CD8-positive, alpha-beta T cell (primary cell): ENCODE measurements at regions of chr15 and their contacts with region 1.

Region 1: DNA sequence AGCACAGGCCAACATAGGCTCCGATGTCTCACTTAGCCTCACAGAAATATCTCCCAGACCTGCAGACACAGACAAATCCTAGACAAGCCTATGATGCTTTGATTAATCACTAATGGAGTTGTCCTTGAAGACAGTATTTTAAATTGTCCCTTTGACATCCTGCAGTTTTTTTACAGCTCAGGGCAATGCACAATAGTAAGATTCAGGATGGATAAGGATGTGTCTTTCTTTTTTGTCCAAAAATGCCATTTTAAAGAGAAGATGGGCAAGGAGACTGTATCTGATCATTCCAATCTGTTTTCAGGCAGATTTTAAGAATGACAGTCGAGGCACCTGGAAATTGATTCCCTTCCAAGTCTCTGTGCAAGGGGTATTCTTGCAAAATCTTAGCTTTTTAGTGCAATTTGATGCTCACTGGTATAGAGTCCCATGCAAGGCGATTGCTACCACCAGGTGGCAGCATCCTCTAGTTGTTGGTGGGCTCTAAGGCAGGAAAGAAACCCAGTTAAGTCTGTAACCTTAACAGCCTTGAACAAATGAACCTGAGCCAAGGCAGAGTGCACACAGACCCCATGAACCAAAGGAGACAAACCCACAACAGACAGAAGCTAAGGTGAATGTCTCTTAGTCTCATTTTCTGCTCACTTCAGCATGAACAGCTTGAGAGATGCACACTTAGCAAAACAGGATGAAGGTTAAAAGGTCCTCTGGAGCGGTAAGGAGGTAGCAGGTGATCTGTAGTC is 51.2 kb upstream of the MINAR1 start:
- DNase-seq: peak; percentile 53 to 84 (median 76)
- ATAC-seq: peak; percentile 76
- H3K4me3 ChIP-seq: no peak overlapping the region
- H3K4me3 Mint-ChIP-seq: no peak overlapping the region
- H3K27ac ChIP-seq: no peak overlapping the region
- H3K27ac Mint-ChIP-seq: no peak overlapping the region
- H3K4me1 ChIP-seq: no peaks in the 10 kb centered on the region
- H3K4me1 Mint-ChIP-seq: peaks cover 4% of the 10 kb centered on the region
- H3K27me3 ChIP-seq: no peaks in the 10 kb centered on the region
- H3K27me3 Mint-ChIP-seq: no peaks in the 10 kb centered on the region
- CTCF ChIP-seq: peak; percentile 78

Region 2: DNA sequence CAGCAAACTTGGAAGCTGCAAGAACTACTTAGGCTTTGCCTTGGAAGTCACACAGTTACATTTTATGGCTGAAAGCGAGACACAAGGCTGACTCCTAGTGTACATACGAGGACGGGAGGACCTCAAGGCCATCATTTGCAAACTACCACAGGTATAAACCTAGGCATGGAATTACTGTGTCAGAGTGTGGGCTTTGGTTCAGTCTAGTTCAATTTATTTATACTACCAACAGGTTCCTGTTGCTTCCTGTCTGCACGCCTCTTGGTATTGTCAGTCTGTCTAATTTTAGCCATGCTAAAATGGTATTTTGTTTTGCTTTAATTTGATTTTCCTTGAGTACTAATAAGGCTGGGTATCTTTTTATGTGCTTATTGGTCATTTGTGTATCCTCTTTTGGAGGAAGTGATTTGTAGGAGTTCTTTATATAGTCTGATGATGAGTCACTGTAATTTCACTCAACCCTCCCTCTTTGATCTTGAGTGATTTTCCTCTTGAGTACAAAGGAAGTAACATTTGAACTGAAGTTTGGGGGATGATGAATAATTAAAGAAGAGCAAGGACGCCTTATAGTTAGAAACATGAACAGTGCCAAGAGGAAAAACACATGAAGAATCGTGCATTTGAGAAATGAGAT is 90.2 kb before region 1 on chr15:
- CTCF ChIA-PET with region 1: no interaction called
- POLR2A ChIA-PET with region 1: no interaction called
- intact Hi-C with region 1: no loop called
- DNase-seq: no peak
- ATAC-seq: no peak
- H3K4me3 ChIP-seq: no peak overlapping the region
- H3K4me3 Mint-ChIP-seq: no peak overlapping the region
- H3K27ac ChIP-seq: no peak overlapping the region
- H3K27ac Mint-ChIP-seq: no peak overlapping the region
- H3K4me1 ChIP-seq: no peaks in the 10 kb centered on the region
- H3K4me1 Mint-ChIP-seq: peaks cover 5% of the 10 kb centered on the region
- H3K27me3 ChIP-seq: no peaks in the 10 kb centered on the region
- H3K27me3 Mint-ChIP-seq: peaks cover 37% of the 10 kb centered on the region
- CTCF ChIP-seq: no peak

Region 3: GRCh38 chr15:79366691-79367090 is 14.2 kb before region 1 on chr15:
- CTCF ChIA-PET with region 1: interaction called, 13 read pairs
- POLR2A ChIA-PET with region 1: no interaction called
- intact Hi-C with region 1: no loop called
- DNase-seq: no peak
- ATAC-seq: no peak
- H3K4me3 ChIP-seq: no peak overlapping the region
- H3K4me3 Mint-ChIP-seq: no peak overlapping the region
- H3K27ac ChIP-seq: no peak overlapping the region
- H3K27ac Mint-ChIP-seq: no peak overlapping the region
- H3K4me1 ChIP-seq: no peaks in the 10 kb centered on the region
- H3K4me1 Mint-ChIP-seq: no peaks in the 10 kb centered on the region
- H3K27me3 ChIP-seq: no peaks in the 10 kb centered on the region
- H3K27me3 Mint-ChIP-seq: no peaks in the 10 kb centered on the region
- CTCF ChIP-seq: no peak

Region 4: DNA sequence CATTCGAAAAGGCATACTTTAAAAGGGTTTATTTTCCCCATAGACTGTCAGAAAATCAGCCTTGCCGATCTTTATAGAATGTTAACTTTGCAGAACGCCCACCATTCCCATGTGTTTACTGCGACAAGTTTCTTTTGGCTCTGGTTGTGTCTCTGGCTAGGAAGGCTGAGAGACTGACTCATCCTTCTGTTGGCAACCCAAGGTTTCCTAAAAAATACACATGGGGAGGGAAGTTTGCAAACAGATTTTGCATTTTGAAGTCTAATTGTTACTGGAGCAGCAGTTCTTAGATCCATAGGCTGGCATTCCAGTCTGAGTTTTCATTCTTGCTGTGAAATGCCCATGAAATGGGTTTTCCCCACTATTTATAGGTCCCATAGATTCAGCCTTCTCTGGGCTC is 13.3 kb after region 1 on chr15:
- CTCF ChIA-PET with region 1: interaction called, 20 read pairs
- POLR2A ChIA-PET with region 1: no interaction called
- intact Hi-C with region 1: no loop called
- DNase-seq: no peak
- ATAC-seq: no peak
- H3K4me3 ChIP-seq: no peak overlapping the region
- H3K4me3 Mint-ChIP-seq: no peak overlapping the region
- H3K27ac ChIP-seq: no peak overlapping the region
- H3K27ac Mint-ChIP-seq: no peak overlapping the region
- H3K4me1 ChIP-seq: no peaks in the 10 kb centered on the region
- H3K4me1 Mint-ChIP-seq: no peaks in the 10 kb centered on the region
- H3K27me3 ChIP-seq: no peaks in the 10 kb centered on the region
- H3K27me3 Mint-ChIP-seq: no peaks in the 10 kb centered on the region
- CTCF ChIP-seq: no peak

Region 5: DNA sequence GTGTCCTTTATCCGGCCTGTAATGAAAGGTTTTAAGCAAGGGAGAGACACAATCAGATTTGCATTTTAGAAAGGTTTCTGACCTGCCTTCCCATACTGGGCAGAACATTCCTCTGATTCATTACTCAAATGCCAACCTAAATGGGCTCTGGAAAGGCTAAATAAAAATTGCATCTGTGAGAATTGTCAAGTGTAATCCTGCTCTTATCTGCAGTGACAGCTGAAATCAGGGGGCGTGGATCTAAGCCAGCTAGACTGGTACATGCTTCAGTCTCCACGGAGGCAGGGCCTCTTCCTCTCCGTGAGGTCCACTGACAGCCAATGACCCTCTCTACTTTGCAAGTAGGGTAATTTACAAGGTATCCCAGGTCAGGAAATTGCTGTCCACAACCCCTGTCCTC is 18.7 kb after region 1 on chr15:
- CTCF ChIA-PET with region 1: interaction called, 20 read pairs
- POLR2A ChIA-PET with region 1: no interaction called
- intact Hi-C with region 1: no loop called
- DNase-seq: no peak
- ATAC-seq: no peak
- H3K4me3 ChIP-seq: no peak overlapping the region
- H3K4me3 Mint-ChIP-seq: no peak overlapping the region
- H3K27ac ChIP-seq: no peak overlapping the region
- H3K27ac Mint-ChIP-seq: no peak overlapping the region
- H3K4me1 ChIP-seq: no peaks in the 10 kb centered on the region
- H3K4me1 Mint-ChIP-seq: no peaks in the 10 kb centered on the region
- H3K27me3 ChIP-seq: no peaks in the 10 kb centered on the region
- H3K27me3 Mint-ChIP-seq: no peaks in the 10 kb centered on the region
- CTCF ChIP-seq: no peak

Region 6: GRCh38 chr15:79442911-79443310 is 62.0 kb after region 1 on chr15:
- CTCF ChIA-PET with region 1: no interaction called
- POLR2A ChIA-PET with region 1: no interaction called
- intact Hi-C with region 1: no loop called
- DNase-seq: no peak
- ATAC-seq: no peak
- H3K4me3 ChIP-seq: no peak overlapping the region
- H3K4me3 Mint-ChIP-seq: no peak overlapping the region
- H3K27ac ChIP-seq: no peak overlapping the region
- H3K27ac Mint-ChIP-seq: no peak overlapping the region
- H3K4me1 ChIP-seq: no peaks in the 10 kb centered on the region
- H3K4me1 Mint-ChIP-seq: no peaks in the 10 kb centered on the region
- H3K27me3 ChIP-seq: no peaks in the 10 kb centered on the region
- H3K27me3 Mint-ChIP-seq: no peaks in the 10 kb centered on the region
- CTCF ChIP-seq: no peak

Region 7: DNA sequence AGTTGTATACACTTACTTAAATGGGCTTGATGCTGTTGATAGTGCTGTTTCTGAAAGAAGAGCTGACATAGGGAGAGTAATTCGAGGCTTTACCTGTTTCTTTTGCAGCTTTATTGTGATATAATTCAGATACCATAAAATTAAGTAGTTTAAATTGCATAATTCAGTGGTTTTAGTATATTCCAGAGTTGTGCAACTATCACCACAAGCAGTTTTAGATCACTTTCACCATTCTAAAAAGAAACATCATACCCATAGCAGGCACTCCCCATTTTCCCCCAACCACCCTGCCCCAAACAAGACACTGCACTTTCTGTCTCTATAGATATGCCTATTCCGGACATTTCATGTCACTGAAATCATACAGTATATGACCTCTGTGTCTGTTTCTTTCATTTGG is 417.4 kb after region 1 on chr15:
- CTCF ChIA-PET with region 1: no interaction called
- POLR2A ChIA-PET with region 1: no interaction called
- intact Hi-C with region 1: no loop called
- DNase-seq: no peak
- ATAC-seq: no peak
- H3K4me3 ChIP-seq: no peak overlapping the region
- H3K4me3 Mint-ChIP-seq: no peak overlapping the region
- H3K27ac ChIP-seq: no peak overlapping the region
- H3K27ac Mint-ChIP-seq: no peak overlapping the region
- H3K4me1 ChIP-seq: no peaks in the 10 kb centered on the region
- H3K4me1 Mint-ChIP-seq: no peaks in the 10 kb centered on the region
- H3K27me3 ChIP-seq: no peaks in the 10 kb centered on the region
- H3K27me3 Mint-ChIP-seq: peaks cover 2% of the 10 kb centered on the region
- CTCF ChIP-seq: no peak

Region 8: GRCh38 chr15:79853458-79854328 is 472.8 kb after region 1 on chr15:
- CTCF ChIA-PET with region 1: interaction called, 40 read pairs
- POLR2A ChIA-PET with region 1: no interaction called
- intact Hi-C with region 1: loop called (anchors 1 kb)
- DNase-seq: peak; percentile 21 to 77 (median 59)
- ATAC-seq: peak; percentile 99
- H3K4me3 ChIP-seq: no peak overlapping the region
- H3K4me3 Mint-ChIP-seq: no peak overlapping the region
- H3K27ac ChIP-seq: no peak overlapping the region
- H3K27ac Mint-ChIP-seq: peak overlapping the region; percentile 42
- H3K4me1 ChIP-seq: no peaks in the 10 kb centered on the region
- H3K4me1 Mint-ChIP-seq: peaks cover 14% of the 10 kb centered on the region
- H3K27me3 ChIP-seq: no peaks in the 10 kb centered on the region
- H3K27me3 Mint-ChIP-seq: no peaks in the 10 kb centered on the region
- CTCF ChIP-seq: peak; percentile 93

Region 9: DNA sequence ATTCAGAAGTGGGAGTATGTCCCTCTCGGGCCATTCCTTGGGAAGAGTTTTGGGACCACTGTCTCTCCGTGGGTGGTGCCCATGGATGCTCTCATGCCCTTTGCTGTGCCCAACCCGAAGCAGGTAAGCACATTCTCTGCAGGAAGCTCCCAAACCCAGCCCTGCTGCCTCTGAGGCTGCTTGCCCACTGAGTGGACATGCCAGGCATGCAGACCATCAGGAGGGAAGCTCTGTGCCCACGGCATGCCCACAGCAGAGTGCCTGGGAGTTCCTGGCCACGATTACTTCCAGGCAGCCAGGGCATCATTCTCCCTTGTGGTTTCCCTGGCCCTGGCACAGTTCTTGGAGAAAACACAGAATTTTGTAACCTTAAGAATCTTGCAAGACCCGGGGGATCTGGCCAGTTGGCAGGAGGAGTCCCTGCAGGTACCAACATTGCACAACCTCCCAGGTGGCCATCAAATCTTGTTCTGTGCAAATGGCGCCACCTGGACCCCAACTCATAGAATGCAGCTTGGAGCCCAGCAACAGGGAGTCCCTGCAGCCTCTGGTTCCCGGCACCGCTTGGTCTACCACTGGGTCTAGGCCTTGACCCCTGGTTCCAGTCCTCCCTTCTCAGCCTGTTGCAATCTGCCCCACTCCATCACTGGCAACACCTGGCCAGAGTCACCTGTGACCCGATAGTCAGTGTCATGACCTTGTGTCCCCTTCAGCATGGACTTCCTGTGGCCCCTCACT is 792.3 kb after region 1 on chr15:
- CTCF ChIA-PET with region 1: interaction called, 17 read pairs
- POLR2A ChIA-PET with region 1: no interaction called
- intact Hi-C with region 1: loop called in 1 of 2 experiments (anchors 1 kb)
- DNase-seq: peak; percentile 52 to 81 (median 69)
- ATAC-seq: peak; percentile 77
- H3K4me3 ChIP-seq: no peak overlapping the region
- H3K4me3 Mint-ChIP-seq: no peak overlapping the region
- H3K27ac ChIP-seq: no peak overlapping the region
- H3K27ac Mint-ChIP-seq: no peak overlapping the region
- H3K4me1 ChIP-seq: no peaks in the 10 kb centered on the region
- H3K4me1 Mint-ChIP-seq: no peaks in the 10 kb centered on the region
- H3K27me3 ChIP-seq: no peaks in the 10 kb centered on the region
- H3K27me3 Mint-ChIP-seq: no peaks in the 10 kb centered on the region
- CTCF ChIP-seq: peak; percentile 76

Region 10: DNA sequence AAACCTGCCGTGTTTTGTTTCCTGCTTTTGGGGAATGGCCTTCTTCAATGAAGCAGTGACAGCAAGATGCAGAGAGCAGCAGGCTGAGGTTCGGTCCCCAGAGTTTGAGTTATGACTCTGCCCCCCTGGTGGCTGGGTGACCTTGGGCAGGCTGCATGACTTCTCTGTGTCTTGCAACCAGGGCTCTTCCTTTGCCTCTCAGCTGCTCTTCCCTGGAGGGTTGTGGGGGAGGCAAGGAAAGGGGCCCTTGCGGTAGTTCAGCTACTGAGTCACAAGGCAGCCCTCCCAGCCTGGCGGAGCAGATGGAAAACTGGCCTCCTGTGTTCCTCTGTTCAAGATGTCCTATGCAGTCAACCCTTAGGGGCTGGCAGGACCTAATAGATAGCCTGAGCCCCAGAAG is 854.0 kb after region 1 on chr15:
- CTCF ChIA-PET with region 1: no interaction called
- POLR2A ChIA-PET with region 1: no interaction called
- intact Hi-C with region 1: loop called in 1 of 2 experiments (anchors 10 kb)
- DNase-seq: peak in 8 of 9 experiments; percentile 11 to 57 (median 30)
- ATAC-seq: no peak
- H3K4me3 ChIP-seq: no peak overlapping the region
- H3K4me3 Mint-ChIP-seq: no peak overlapping the region
- H3K27ac ChIP-seq: no peak overlapping the region
- H3K27ac Mint-ChIP-seq: no peak overlapping the region
- H3K4me1 ChIP-seq: no peaks in the 10 kb centered on the region
- H3K4me1 Mint-ChIP-seq: no peaks in the 10 kb centered on the region
- H3K27me3 ChIP-seq: no peaks in the 10 kb centered on the region
- H3K27me3 Mint-ChIP-seq: peaks cover 35% of the 10 kb centered on the region
- CTCF ChIP-seq: no peak